Activated naive CD8-positive, alpha-beta T cell treated with anti-CD3 and anti-CD28 coated beads, Interleukin-2, amount 10 ng/mL, durations not matched to agents 7 days and 5 days (primary cell): ENCODE measurements at regions of chr16 and their contacts with region 1.

Region 1: DNA sequence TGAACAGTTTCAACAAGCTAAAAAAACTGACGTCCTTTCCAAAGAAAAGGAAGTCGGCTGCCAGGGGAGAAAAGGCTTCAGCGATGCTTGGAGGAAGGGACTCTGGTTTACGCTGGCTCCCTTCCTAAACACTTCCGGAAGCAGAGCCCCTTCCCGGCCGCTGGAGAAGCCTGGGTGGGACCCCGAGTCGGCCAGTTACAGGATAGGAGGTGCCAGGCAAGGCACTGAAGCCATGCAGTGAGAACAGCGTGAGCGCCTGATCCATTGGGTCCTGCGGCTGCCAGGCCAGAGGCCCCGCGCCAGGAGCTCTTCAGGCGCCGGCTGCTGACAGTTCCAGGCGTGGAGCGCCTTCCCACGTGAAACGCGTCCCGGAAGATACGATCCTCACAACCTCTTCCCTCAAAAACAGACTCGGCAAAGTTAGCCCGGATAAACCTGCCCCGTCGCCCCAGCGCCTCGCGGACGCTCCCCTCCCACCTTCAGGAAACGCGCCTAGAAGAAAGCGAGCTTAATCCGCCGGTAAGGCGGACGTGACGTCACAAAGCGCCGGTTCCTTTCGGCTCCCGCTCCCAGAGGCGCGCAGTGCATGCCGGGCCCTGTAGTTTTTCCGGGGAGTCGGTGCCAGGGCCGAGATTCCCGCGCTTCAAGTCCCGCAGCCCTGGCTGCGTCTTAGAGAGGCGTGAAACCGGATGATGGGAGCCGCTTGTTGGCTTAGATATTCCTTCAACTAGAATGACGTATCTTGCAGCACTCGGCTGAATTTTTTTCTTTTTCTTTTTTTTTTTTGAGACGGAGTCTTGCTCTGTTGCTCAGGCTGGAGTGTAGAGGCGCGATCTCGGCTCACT is at the start of gene ADAT1:
- DNase-seq: peak; percentile 95
- ATAC-seq: peak; percentile 95
- H3K4me3 Mint-ChIP-seq: peak within 1 kb of the TSS; percentile 97
- H3K27ac Mint-ChIP-seq: peak within 1 kb of the TSS; percentile 97
- H3K4me1 Mint-ChIP-seq: peaks cover 37% of the 10 kb centered on the region
- H3K27me3 Mint-ChIP-seq: no peaks in the 10 kb centered on the region
- total RNA-seq, gene ADAT1: 66.1 to 72.1 TPM

Region 2: DNA sequence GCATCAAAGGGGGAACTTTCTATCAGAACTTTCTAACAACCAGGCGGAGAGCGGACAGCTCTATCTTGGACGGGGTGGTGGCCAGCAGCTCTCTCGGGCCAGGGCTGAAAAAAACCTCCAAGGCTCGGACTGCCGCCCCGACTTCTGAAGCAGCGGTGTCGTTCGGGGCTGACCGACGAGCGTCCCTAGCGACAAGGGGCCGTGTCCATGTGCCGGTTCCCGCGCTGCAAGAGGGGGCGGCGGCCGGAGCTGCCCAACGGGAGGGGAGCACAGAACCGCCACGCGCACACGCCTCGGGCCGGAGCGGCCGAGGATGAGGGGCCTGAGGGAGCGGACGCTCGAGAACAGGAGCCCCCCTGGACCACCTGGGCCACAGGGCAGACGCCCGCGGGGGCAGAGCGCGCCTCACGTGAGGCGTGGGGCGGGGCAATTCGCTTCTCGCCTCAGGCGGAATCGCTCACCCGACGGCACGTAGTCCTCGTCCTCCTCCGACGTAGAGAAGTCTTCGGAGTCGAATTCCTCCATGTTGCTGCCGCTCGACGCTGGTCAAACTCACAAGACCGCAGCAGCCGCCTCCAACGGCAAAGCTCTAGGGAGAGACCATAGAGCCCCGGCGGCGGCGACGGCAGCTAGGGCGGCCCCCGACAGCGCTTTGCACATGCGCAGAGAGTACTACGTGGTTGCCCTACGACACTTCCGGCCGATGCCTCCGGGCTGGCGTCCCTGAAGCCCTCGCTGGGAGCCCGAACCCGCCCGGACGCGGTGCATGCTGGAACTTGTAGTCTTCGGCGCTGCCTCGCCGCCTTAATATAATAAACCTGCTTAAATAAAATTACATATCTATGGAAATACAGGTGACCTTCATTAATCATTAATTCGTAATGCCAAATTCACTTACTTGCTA is 189.9 kb before region 1 on chr16 and contains the start of gene CFDP1:
- POLR2A ChIA-PET with region 1: interaction called, 10 read pairs
- DNase-seq: peak; percentile 93
- ATAC-seq: peak; percentile 93
- H3K4me3 Mint-ChIP-seq: peak within 1 kb of the TSS; percentile 90
- H3K27ac Mint-ChIP-seq: peak within 1 kb of the TSS; percentile 91
- H3K4me1 Mint-ChIP-seq: peaks cover 24% of the 10 kb centered on the region
- H3K27me3 Mint-ChIP-seq: peaks cover 3% of the 10 kb centered on the region
- total RNA-seq, gene CFDP1: 47.8 to 49.4 TPM

Region 3: DNA sequence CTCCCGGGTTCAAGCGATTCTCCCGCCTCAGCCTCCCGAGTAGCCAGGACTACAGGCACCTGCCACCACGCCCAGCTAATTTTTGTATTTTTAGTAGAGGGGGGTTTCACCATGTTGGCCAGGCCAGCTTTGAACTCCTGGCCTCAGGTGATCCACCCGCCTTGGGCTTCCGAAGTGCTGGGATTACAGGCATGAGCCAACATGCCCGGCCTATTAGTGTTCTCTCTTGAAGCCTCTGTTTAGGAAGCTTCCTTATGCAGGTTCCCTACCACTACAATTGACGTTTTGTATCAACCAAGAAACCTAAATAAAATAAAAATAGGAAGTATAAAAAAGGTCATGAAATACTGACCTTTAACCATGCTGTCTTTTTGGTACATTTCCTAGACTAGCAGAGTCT is 103.1 kb before region 1 on chr16:
- POLR2A ChIA-PET with region 1: interaction called, 19 read pairs
- DNase-seq: no peak
- ATAC-seq: no peak
- H3K4me3 Mint-ChIP-seq: no peak overlapping the region
- H3K27ac Mint-ChIP-seq: no peak overlapping the region
- H3K4me1 Mint-ChIP-seq: peaks cover 8% of the 10 kb centered on the region
- H3K27me3 Mint-ChIP-seq: peaks cover 3% of the 10 kb centered on the region

Region 4: DNA sequence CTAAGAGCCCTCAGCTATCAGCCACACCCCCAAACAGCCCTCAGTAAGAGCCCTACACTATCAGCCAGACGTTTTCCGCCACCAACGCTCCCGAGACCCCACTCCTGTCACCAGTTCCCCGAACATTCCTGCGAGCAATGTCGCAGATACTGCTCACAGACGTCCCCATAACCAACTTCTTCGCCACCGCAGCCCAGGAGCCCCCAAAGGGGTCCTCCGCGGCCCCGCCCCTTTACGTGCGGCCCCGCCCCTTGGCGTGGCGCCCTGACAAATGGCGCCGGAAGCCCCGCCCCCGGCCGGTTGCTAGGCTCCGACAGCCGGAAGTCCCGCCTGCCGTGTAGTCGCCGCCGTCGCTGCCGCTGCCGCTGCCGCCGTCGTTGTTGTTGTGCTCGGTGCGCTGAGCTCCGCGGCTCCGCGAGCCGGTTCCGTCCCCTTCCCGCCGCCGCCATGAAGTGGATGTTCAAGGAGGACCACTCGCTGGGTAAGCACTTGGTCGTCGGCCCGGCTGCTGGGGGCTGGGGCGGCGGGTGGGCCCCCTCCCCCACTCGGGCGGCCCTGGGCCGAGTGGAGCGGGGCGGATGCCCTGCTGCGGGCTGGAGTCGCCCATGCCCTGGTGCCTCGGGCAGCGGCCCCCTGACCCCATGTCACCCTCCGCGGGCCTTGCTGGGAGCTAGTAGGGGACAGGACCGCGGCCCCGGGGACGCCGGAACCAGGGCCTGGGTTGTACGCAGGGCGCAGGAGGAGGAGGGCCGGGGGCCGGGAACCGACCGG is 56.8 kb before region 1 on chr16 and contains the start of gene GABARAPL2:
- POLR2A ChIA-PET with region 1: interaction called, 22 read pairs
- DNase-seq: peak; percentile 98
- ATAC-seq: peak; percentile 76
- H3K4me3 Mint-ChIP-seq: peak within 1 kb of the TSS; percentile 93
- H3K27ac Mint-ChIP-seq: peak within 1 kb of the TSS; percentile 91
- H3K4me1 Mint-ChIP-seq: peaks cover 18% of the 10 kb centered on the region
- H3K27me3 Mint-ChIP-seq: peaks cover 19% of the 10 kb centered on the region
- total RNA-seq, gene GABARAPL2: 71.6 to 72.9 TPM

Region 5: DNA sequence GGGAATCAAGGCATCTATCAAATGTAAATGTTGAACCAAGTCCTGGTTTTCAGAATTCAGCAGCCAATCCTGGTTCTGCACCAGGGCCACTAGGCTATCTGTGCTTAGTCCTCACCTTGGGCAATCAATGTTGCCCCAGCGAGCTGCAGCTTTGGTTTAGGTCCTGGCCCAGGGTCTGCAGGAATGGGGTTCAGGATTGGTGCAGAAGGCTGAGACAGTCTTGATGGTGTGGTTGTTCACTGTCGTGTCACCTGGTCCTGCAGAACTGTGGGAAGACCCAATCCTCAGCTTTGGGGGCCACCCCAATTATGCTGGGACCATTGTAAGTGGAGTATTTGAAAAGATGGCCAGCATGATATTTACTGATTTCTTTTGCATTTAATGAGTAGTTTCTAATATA is 35.2 kb after region 1 on chr16:
- POLR2A ChIA-PET with region 1: no interaction called
- DNase-seq: no peak
- ATAC-seq: no peak
- H3K4me3 Mint-ChIP-seq: no peak overlapping the region
- H3K27ac Mint-ChIP-seq: peak overlapping the region; percentile 25
- H3K4me1 Mint-ChIP-seq: peaks cover 14% of the 10 kb centered on the region
- H3K27me3 Mint-ChIP-seq: no peaks in the 10 kb centered on the region

Region 6: DNA sequence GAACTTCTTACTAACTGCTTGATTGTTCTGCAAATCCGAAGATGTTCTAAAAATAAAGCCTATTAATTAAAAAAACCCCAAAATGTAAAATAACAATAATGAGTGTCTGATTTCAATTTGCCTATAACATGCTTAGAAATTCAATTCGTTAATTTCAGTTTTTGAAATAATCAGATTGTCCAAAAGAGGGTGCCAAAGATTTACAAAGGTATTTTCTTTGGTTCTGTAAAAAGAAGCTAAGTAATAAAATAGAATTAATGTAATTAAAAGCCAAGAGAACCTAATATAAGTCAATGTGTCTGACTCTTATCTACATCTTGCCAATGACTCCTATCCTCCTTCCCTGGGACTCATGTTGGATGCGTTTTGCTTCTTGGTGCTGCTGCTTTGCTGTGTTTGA is 178.3 kb after region 1 on chr16:
- POLR2A ChIA-PET with region 1: no interaction called
- DNase-seq: no peak
- ATAC-seq: no peak
- H3K4me3 Mint-ChIP-seq: no peak overlapping the region
- H3K27ac Mint-ChIP-seq: no peak overlapping the region
- H3K4me1 Mint-ChIP-seq: no peaks in the 10 kb centered on the region
- H3K27me3 Mint-ChIP-seq: peaks cover 2% of the 10 kb centered on the region